ENCODE measurements at regions of chr2 and their contacts with region 1.

Region 1: DNA sequence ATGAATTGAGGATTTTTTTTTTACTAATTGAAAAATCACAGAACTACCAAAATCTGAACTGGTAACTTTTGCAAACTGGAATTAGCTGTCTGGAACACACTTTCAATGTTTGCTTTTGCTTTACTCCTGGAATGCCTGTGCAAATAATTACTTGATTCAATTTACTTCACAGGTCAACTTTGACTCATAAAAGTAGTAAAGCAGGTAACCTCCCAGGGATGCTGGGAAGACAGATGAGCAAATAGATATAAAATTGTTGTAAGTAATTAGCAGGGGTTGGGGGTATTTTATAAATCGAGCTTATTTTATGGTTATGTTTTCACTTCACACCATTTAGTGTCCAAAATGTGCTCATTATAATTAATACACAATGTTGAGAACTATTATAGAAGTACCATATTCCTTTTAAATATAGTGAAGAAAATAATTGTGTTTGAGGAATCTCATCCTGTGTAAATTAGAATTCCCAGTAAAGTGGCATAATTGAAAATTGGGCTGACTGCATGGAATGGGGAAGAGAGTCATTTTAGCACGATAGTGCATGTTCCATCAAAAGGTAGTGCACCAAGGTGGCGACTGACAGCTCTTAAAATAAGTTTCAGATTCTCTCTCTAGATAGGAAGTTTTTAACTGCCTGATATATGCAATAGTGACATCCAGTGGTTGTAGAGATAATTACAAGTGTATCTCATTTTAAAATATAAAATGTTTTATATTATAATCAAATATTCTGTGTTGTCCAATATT is 398.1 kb upstream of the HNRNPA3 start:
- DNase-seq: peak; percentile 38
- H3K4me3 Mint-ChIP-seq: no peak overlapping the region
- H3K27ac Mint-ChIP-seq: no peak overlapping the region
- H3K4me1 Mint-ChIP-seq: no peaks in the 10 kb centered on the region
- H3K27me3 Mint-ChIP-seq: peaks cover 12% of the 10 kb centered on the region
- CTCF ChIP-seq: peak; percentile 59

Region 2: GRCh38 chr2:176126929-176127773 is 687.3 kb before region 1 on chr2:
- CTCF ChIA-PET with region 1: interaction called, 28 read pairs
- POLR2A ChIA-PET with region 1: no interaction called
- intact Hi-C with region 1: loop called (anchors 1 kb)
- DNase-seq: peak; percentile 63
- H3K4me3 Mint-ChIP-seq: no peak overlapping the region
- H3K27ac Mint-ChIP-seq: no peak overlapping the region
- H3K4me1 Mint-ChIP-seq: no peaks in the 10 kb centered on the region
- H3K27me3 Mint-ChIP-seq: peaks cover 11% of the 10 kb centered on the region
- CTCF ChIP-seq: peak; percentile 76

Region 3: DNA sequence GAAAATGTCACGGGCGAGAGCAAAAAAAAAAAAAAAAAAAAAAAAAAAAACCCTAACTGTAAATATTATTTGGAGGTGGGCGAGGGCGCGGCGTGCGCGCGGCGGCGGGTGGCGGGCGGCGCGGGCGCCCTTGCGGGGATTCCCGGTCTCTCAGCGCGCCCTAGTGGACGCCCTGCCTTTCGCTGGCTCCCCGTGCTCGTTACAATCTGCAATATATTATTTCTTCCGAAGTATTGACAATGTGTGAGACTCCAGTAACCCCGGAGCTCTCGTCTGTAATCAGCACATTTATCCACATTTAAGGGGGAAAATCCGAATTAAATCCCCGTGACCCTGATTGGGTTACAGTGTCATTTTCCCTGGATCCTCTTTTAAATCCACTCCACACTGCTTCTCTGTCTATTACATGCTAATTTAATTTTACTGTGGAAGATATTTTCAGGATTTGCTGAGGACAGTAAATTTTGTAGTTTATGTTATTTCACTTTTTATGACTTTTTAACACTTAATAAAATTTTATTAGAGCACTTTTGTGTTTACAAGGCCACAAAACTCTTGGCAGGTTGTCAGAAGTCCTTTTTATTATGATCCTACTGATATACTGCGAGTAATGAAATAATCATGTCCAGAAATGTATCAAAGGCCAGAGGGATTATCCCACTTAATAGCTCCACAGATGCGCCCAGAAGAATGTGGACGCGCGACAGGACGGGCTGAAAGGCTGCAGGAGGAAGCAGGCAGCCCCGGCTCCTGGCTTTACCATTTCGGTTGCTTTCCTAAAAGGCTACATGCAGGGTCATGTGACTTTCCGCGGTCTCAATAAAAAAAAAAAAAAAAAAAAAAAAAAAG is 176.1 kb before region 1 on chr2:
- CTCF ChIA-PET with region 1: interaction called, 10 read pairs
- POLR2A ChIA-PET with region 1: no interaction called
- intact Hi-C with region 1: loop called (anchors 2 kb)
- DNase-seq: peak; percentile 61
- H3K4me3 Mint-ChIP-seq: peak overlapping the region; percentile 74
- H3K27ac Mint-ChIP-seq: no peak overlapping the region
- H3K4me1 Mint-ChIP-seq: peaks cover 6% of the 10 kb centered on the region
- H3K27me3 Mint-ChIP-seq: no peaks in the 10 kb centered on the region
- CTCF ChIP-seq: peak; percentile 85

Region 4: GRCh38 chr2:176830362-176830761 is 15.9 kb after region 1 on chr2:
- CTCF ChIA-PET with region 1: interaction called, 17 read pairs
- POLR2A ChIA-PET with region 1: no interaction called
- intact Hi-C with region 1: no loop called
- DNase-seq: peak; percentile 18
- H3K4me3 Mint-ChIP-seq: no peak overlapping the region
- H3K27ac Mint-ChIP-seq: no peak overlapping the region
- H3K4me1 Mint-ChIP-seq: no peaks in the 10 kb centered on the region
- H3K27me3 Mint-ChIP-seq: peaks cover 90% of the 10 kb centered on the region
- CTCF ChIP-seq: no peak

Region 5: GRCh38 chr2:177724398-177725287 is 910.2 kb after region 1 on chr2:
- CTCF ChIA-PET with region 1: no interaction called
- POLR2A ChIA-PET with region 1: no interaction called
- intact Hi-C with region 1: loop called (anchors 10 kb)
- DNase-seq: peak; percentile 58
- H3K4me3 Mint-ChIP-seq: no peak overlapping the region
- H3K27ac Mint-ChIP-seq: no peak overlapping the region
- H3K4me1 Mint-ChIP-seq: no peaks in the 10 kb centered on the region
- H3K27me3 Mint-ChIP-seq: peaks cover 53% of the 10 kb centered on the region
- CTCF ChIP-seq: peak; percentile 86